ENCODE measurements at regions of chr3 and their contacts with region 1.

Region 1: DNA sequence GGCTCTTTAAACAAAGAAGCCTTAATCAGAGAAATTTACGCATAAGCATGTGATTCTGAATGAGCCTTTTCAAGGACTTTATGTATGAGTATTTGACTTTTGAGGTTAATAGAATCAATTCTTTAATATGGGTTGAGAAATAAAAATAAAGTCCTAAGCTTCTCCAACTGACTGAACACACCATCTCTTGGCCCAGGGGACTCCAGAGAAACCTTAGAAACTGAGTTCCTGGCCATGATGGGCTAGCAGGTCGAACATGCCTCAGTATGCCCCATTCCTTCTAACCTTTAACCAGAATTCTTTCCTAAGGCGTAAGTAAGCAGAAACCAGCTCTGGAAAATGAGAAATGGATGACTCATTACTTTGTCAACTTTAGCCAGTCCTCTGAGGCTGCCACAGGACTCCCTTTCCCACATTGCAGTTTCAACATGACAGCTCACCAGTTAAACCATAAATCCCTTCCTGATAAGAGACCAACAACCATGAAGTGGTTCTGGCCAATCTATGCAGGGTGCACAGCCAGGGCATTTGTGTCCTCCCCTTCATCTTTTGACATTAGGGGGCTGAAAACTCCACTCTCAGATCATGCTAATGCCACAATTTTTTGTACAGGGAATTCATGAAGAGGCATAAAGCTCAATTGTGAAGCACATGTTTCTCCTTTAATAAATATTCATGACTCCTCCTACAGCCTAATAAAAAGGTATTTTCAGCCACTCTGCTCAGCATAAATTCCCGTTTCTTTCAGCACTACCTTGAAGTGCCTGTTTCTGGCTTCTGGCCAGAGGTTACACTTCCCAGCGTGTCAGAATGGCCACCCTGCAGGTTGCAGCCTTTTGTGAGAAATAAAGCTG is 33.3 kb downstream of the TM4SF18 start:
- DNase-seq: peak; percentile 96
- ATAC-seq: peak; percentile 96
- H3K4me3 ChIP-seq: peak overlapping the region in 1 of 2 experiments; percentile 28; a peak in 2 of 4 replicates
- H3K27ac ChIP-seq: peak overlapping the region; percentile 99
- H3K4me1 ChIP-seq: peaks cover 41% of the 10 kb centered on the region
- H3K27me3 ChIP-seq: no peaks in the 10 kb centered on the region
- CTCF ChIP-seq: 0 out of 2 replicates have a peak, but pooled peaks have one; percentile 5

Region 2: DNA sequence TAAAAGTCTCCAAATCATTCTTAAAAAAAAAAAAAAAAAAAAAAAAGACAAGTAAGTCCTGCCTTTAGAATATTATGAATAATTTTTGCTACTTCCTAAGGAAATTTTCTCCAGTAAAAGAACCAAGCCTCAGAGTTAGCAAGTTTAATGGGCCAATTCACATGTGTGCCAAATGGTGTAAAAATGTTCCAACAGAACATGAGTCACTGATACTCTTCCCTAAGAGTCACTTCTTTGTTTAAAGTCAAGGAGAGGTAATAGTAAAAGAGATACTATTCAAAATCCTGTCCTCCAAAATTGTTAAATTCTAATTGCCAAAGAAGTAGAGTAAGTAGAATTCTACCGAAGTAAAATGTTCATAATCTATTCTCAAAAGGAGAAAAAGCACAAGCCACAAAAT is 452.8 kb before region 1 on chr3:
- CTCF ChIA-PET with region 1: no interaction called
- POLR2A ChIA-PET with region 1: interaction called, 10 read pairs
- in situ Hi-C with region 1: no loop called
- intact Hi-C with region 1: no loop called
- DNase-seq: no peak
- ATAC-seq: no peak
- H3K4me3 ChIP-seq: no peak overlapping the region
- H3K27ac ChIP-seq: no peak overlapping the region
- H3K4me1 ChIP-seq: no peaks in the 10 kb centered on the region
- H3K27me3 ChIP-seq: peaks cover 18% of the 10 kb centered on the region
- CTCF ChIP-seq: no peak